AG04450 (cell line): ENCODE measurements at regions of chr7 and their contacts with region 1.

Region 1: DNA sequence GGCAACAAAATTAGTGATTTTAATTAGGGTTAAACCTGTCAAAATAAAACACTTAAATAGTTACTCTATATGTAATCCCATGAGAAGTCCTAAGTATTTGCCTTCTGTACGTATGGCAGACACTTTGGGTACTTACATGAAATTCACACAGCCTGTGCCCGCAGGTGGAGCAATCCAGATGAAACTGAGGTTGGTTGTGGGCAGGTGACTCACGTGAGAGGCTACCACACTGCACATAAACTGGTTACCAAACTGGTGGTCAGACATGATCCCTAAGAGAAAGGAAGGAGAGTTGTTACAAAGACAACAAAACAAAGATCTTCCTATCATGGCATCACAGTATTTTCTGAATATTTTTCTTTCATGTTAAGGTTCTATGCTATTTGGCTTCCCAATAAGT is 156.1 kb downstream of the RELN start:
- DNase-seq: no peak
- H3K4me3 ChIP-seq: no peak overlapping the region
- H3K27ac ChIP-seq: no peak overlapping the region
- H3K27me3 ChIP-seq: no peaks in the 10 kb centered on the region
- CTCF ChIP-seq: no peak

Region 2: DNA sequence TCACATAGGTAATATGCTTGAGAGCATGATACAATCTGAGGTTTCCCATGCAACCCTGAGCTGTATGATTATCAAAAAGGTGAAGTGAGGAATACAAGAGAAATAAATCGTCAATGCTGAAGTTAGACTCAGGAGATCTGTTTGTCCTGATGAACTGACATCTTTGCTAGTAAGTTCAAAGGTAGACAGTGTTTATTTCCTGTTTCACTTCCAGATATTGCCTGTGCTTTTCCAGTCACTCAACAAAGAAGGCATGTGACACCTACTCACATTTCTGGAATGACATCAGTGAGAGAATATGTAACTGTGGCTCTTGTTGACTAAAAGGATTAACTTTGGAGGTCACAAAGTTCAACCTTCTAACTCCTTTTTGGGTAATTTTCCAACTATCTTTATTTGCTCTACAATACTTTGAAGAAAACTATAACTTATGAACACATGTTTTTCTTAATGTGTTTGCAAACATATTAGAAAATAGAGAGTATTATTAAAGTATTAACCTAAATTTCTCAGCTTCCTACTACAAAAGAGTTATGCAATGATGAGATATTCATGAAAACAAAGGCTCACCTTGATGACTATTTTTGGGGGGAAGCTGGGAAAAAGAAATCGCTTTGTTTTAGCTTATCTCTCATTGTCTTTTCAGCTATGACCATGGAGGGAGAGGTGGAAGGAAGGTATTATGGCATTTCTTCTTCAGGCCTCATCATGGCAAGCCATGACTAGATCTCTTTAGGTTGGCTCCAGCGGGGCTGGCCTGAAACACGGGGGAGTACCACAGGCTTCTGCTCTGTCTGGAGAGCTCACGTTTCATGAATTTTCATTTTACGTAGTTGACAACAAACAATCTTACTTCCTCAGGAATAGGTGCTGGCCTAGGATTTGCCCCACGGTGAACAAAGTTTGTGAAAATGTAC is 172.7 kb before region 1 on chr7:
- CTCF ChIA-PET with region 1: no interaction called
- POLR2A ChIA-PET with region 1: no interaction called
- DNase-seq: no peak
- H3K4me3 ChIP-seq: no peak overlapping the region
- H3K27ac ChIP-seq: no peak overlapping the region
- H3K27me3 ChIP-seq: no peaks in the 10 kb centered on the region
- CTCF ChIP-seq: no peak

Region 3: DNA sequence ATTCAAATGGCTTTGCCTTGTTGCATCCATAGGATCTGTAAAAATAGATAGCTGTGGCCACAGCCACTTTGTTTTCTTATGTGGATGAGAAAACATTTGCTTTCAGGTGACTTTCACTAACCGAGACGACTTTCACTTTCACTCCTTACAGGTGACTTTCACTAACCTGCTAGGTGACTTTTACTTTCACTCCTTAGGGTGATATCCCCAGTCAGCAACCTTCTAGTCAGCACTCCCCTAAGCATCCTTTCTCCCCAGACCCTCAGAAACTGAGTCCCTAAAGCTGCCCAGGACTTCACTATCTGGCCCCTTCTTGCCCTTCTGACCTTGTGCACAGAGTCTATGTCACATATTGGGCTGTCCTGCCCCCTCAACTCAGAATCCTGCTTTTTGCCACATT is 21.4 kb before region 1 on chr7:
- CTCF ChIA-PET with region 1: no interaction called
- POLR2A ChIA-PET with region 1: interaction called, 12 read pairs
- DNase-seq: no peak
- H3K4me3 ChIP-seq: no peak overlapping the region
- H3K27ac ChIP-seq: no peak overlapping the region
- H3K27me3 ChIP-seq: no peaks in the 10 kb centered on the region
- CTCF ChIP-seq: no peak

Region 4: DNA sequence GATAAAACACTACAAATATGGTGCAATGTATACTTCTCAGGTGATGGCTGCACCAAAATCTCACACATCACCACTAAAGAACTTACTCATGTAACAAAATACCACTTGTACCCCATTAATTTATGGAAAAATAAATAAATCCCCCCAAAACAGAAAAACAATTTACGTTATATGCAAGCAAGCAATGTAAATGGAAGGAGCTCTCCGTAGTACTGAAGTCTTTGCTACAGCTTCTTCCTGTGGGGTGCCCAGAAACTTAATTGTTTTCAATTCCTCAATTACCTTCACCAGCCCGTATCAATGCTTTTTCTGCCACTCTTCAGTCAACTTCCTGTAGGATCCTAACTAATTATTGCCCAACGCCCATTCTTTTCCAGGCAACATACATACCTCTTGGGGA is 18.0 kb after region 1 on chr7:
- CTCF ChIA-PET with region 1: no interaction called
- POLR2A ChIA-PET with region 1: no interaction called
- DNase-seq: peak; percentile 0
- H3K4me3 ChIP-seq: no peak overlapping the region
- H3K27ac ChIP-seq: no peak overlapping the region
- H3K27me3 ChIP-seq: no peaks in the 10 kb centered on the region
- CTCF ChIP-seq: no peak